A673 (cell line): ENCODE measurements at regions of chr21 and their contacts with region 1.

Region 1: DNA sequence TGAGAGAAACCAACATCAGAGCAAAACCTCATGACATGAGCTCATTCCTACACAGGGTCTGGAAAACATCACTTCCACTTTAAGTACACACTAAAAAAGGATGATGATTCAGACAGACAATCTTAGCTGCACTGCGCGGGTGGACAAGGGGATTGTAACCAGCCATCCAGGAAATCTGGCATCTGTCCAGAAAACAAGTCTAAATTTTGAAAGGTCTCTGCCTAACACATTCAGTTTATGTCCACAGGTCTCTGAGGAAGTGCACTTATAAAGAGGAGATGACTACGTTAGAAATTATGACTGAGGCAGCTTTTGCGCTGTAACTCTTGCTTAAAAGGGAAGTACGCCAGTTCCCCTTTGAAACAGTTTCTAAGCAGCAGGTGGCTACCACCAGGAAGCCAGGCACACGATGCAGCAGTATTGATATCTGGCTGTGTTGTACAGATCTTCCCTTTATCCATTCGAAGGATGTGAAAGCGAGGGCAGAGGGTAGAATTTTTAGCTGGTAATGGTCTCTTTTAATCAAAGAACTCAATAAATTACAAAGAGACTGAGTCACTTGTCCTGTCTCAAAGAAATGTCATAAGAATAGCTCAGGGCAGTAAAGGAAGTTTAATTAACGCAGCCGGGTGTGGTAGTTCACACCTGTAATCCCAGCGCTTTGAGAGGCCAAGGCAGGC is 128.0 kb downstream of the SETD4 start:
- DNase-seq: peak; percentile 89
- H3K4me3 ChIP-seq: no peak overlapping the region
- H3K27ac ChIP-seq: no peak overlapping the region
- H3K4me1 ChIP-seq: peaks cover 13% of the 10 kb centered on the region
- H3K27me3 ChIP-seq: no peaks in the 10 kb centered on the region
- CTCF ChIP-seq: no peak

Region 2: GRCh38 chr21:34693192-34693810 is 1239.1 kb before region 1 on chr21:
- CTCF ChIA-PET with region 1: no interaction called
- POLR2A ChIA-PET with region 1: no interaction called
- intact Hi-C with region 1: loop called (anchors 10 kb)
- DNase-seq: peak; percentile 76
- H3K4me3 ChIP-seq: no peak overlapping the region
- H3K27ac ChIP-seq: no peak overlapping the region
- H3K4me1 ChIP-seq: no peaks in the 10 kb centered on the region
- H3K27me3 ChIP-seq: peaks cover 12% of the 10 kb centered on the region
- CTCF ChIP-seq: peak; percentile 83

Region 3: DNA sequence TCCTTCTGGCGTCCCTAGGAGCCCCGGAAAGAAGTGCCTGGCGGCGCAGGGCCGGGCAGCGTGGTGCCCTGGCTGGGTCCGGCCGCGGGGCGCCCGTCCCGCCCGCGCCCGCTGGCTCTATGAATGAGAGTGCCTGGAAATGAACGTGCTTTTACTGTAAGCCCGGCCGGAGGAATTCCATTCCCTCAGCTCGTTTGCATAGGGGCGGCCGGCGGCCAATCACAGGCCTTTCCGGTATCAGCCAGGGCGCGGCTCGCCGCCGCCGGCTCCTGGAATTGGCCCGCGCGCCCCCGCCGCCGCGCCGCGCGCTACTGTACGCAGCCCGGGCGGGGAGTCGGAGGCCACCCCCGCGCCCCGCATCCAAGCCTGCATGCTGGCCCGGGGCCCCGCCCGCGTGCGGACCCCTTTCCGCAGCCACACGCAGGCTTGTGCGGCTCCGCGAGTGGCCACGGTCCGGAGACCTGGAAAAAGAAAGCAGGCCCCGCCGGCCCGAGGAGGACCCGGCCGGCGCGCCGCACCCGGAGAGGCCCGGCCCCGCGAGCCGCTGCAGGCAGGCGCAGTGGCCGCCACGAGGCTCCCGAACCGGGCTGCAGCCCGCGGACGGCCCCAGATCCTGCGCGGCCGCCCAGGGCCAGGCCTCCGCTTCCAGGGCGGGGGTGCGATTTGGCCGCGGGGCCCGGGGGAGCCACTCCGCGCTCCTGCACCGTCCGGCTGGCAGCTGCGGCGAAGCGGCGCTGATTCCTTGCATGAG is 1043.6 kb before region 1 on chr21:
- CTCF ChIA-PET with region 1: no interaction called
- POLR2A ChIA-PET with region 1: no interaction called
- intact Hi-C with region 1: loop called (anchors 10 kb)
- DNase-seq: peak; percentile 88
- H3K4me3 ChIP-seq: peak overlapping the region; percentile 40
- H3K27ac ChIP-seq: no peak overlapping the region
- H3K4me1 ChIP-seq: peaks cover 19% of the 10 kb centered on the region
- H3K27me3 ChIP-seq: peaks cover 96% of the 10 kb centered on the region
- CTCF ChIP-seq: no peak

Region 4: DNA sequence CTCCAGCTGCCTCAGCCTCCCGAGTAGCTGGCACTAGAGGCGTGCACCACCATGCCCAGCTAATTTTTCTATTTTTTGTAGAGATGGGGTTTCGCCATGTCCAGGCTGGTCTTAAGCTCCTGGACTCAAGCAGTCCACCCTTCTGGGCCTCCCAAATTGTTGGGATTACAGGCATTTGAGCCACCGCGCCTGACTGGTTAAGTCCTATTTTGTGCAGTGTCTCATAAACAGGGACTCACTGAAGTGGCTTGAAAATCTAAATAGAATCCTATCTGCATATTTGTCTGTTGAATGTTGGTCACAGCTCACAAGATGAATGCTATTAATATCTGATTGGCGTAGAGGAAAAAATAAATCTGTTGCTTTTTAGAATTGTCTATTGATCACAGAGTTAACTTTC is 446.9 kb after region 1 on chr21:
- CTCF ChIA-PET with region 1: no interaction called
- POLR2A ChIA-PET with region 1: no interaction called
- intact Hi-C with region 1: no loop called
- DNase-seq: no peak
- H3K4me3 ChIP-seq: no peak overlapping the region
- H3K27ac ChIP-seq: no peak overlapping the region
- H3K4me1 ChIP-seq: peaks cover 43% of the 10 kb centered on the region
- H3K27me3 ChIP-seq: no peaks in the 10 kb centered on the region
- CTCF ChIP-seq: no peak